ENCODE measurements at regions of chr9 and their contacts with region 1.

Region 1: DNA sequence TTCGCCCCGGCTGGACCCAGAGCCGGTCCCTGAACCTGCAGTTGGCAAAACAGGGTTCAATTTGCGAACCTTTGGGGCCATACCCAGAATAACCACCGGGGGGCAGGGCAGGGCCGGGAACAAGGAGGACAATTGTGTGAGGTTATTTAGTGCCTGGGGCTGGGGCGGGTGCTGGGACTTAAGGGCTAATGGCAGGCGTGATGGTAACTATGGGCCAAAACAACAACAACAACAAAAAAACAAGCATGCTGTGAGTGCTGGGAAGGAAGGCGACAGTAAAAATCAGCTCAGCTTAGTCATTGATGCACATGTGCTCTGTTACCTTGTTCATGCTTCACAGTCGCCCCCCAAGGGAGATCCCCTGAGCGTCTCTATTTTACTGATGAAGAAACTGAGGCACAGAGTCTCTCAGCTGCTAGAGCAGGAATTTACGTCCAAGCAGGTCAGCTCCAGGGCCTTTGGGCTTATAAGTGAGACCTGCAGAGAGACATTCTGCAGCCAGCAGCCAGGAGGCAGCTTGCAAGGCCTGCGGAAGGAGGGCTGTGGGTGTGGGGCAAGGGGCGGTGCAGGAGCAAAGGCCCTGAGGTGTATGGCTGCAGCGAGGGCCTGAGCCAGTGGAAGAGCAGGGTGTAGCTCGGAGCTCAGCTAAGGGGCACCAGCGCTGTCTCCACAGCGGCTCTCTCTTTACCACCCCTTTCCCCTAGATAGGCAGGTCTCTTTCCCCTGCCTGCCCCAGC is 106.0 kb downstream of the PHF2 start:
- DNase-seq: peak; percentile 70
- ATAC-seq: peak; percentile 59
- H3K4me3 Mint-ChIP-seq: no peak overlapping the region
- H3K27ac Mint-ChIP-seq: no peak overlapping the region
- H3K4me1 Mint-ChIP-seq: no peaks in the 10 kb centered on the region
- H3K27me3 Mint-ChIP-seq: peaks cover 2% of the 10 kb centered on the region

Region 2: GRCh38 chr9:93630806-93631411 is 51.5 kb before region 1 on chr9:
- CTCF ChIA-PET with region 1: no interaction called
- POLR2A ChIA-PET with region 1: no interaction called
- DNase-seq: no peak
- ATAC-seq: no peak
- H3K4me3 Mint-ChIP-seq: no peak overlapping the region
- H3K27ac Mint-ChIP-seq: no peak overlapping the region
- H3K4me1 Mint-ChIP-seq: no peaks in the 10 kb centered on the region
- H3K27me3 Mint-ChIP-seq: no peaks in the 10 kb centered on the region

Region 3: DNA sequence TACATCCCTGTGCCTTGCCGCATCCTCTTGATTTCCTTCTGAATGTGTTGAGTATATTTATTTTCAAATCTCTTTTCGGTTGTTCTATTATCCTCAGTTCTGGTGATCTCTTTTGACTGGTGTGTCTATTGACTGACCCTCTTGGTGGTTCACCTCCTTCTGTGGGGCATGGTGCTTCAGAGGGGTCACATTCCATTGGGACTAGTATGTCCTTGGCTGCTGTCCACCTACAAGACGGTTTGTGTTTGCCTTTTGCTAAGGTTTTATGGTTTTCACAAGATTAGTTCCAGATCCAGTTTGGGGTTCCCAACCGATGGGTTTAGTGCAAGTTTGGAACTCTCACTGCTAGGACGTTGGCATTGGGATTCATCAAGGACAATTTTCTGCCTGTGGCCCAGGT is 39.4 kb before region 1 on chr9:
- CTCF ChIA-PET with region 1: no interaction called
- POLR2A ChIA-PET with region 1: no interaction called
- DNase-seq: no peak
- ATAC-seq: no peak
- H3K4me3 Mint-ChIP-seq: no peak overlapping the region
- H3K27ac Mint-ChIP-seq: no peak overlapping the region
- H3K4me1 Mint-ChIP-seq: no peaks in the 10 kb centered on the region
- H3K27me3 Mint-ChIP-seq: no peaks in the 10 kb centered on the region

Region 4: GRCh38 chr9:93962561-93963440 is 280.4 kb after region 1 on chr9:
- CTCF ChIA-PET with region 1: interaction called, 25 read pairs
- POLR2A ChIA-PET with region 1: no interaction called
- DNase-seq: peak; percentile 90
- ATAC-seq: peak; percentile 72
- H3K4me3 Mint-ChIP-seq: no peak overlapping the region
- H3K27ac Mint-ChIP-seq: no peak overlapping the region
- H3K4me1 Mint-ChIP-seq: peaks cover 38% of the 10 kb centered on the region
- H3K27me3 Mint-ChIP-seq: peaks cover 44% of the 10 kb centered on the region

Measured in activated CD8-positive, alpha-beta T cell treated with anti-CD3 and anti-CD28 coated beads, Interleukin-2, amount 10 ng/mL, durations not matched to agents 7 days and 5 days (primary cell).